Heart left ventricle (tissue), 16 donors: ENCODE measurements at regions of chr6 and their contacts with region 1.

Region 1: DNA sequence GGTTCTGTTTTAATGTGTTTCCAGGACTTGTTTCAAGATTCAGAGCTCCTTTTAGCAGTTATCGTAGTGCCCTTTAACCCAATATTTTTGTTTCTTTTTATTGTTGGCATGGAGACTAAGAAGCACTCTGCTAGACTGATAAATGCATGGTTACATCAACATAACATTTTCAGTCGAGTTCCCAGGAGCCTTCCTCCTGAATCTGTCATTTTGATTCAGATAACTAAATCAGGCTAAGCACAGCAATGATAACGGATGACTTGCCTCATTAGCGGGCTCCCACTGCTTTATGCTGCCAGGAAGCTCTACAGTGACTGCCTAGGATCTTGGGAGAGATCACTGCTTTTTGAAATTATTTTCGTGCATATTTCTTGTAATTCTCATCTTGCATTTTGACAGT is 772.8 kb upstream of the GJE1 start:
- DNase-seq: peak in 3 of 5 donors; percentile 7 to 25 (median 18)
- ATAC-seq: peak; percentile 71 to 94 (median 80)
- H3K4me3 ChIP-seq: peak overlapping the region in 6 of 12 donors; percentile 2 to 25 (median 6)
- H3K27ac ChIP-seq: peak overlapping the region in 9 of 12 donors; percentile 10 to 60 (median 48)
- H3K4me1 ChIP-seq: peaks cover 0 to 20% (median 4%) of the 10 kb centered on the region in 12 donors
- H3K27me3 ChIP-seq: no peaks in the 10 kb centered on the region
- CTCF ChIP-seq: no peak
- POLR2A ChIP-seq: no peak

Region 2: DNA sequence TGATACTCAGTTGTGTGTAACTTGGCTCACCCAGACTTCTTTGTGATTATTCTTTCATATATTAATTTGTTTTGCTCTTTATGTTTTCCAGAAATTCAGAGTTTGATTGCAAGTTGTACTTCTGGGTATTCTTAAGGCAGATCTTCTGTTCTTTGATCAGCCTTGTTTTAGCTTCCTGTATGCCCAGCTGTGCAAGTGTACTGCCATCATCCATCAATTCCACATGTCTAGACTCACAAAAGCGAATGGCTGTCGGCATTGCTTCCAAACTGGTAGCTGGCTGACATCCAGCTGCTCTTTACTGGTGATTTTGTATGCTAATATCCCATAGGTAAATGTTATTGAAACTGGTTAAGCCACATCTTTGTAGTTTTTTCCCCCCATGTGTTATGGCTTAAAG is 900.8 kb before region 1 on chr6:
- intact Hi-C with region 1: no loop called
- DNase-seq: no peak
- ATAC-seq: no peak
- H3K4me3 ChIP-seq: no peak overlapping the region
- H3K27ac ChIP-seq: no peak overlapping the region
- H3K4me1 ChIP-seq: peaks cover 0 to 20% (median 6%) of the 10 kb centered on the region in 12 donors
- H3K27me3 ChIP-seq: no peaks in the 10 kb centered on the region
- CTCF ChIP-seq: no peak
- POLR2A ChIP-seq: no peak

Region 3: GRCh38 chr6:141309295-141309694 is 50.7 kb before region 1 on chr6:
- intact Hi-C with region 1: loop called in 1 of 10 experiments (anchors 2 kb)
- DNase-seq: no peak
- ATAC-seq: peak in 2 of 4 donors; percentile 58 to 62
- H3K4me3 ChIP-seq: no peak overlapping the region
- H3K27ac ChIP-seq: no peak overlapping the region
- H3K4me1 ChIP-seq: peaks cover 0 to 4% (median 0%) of the 10 kb centered on the region in 12 donors
- H3K27me3 ChIP-seq: no peaks in the 10 kb centered on the region
- CTCF ChIP-seq: peak in 5 of 12 donors; percentile 10 to 27 (median 19)
- POLR2A ChIP-seq: no peak

Region 4: GRCh38 chr6:141394125-141394536 is 34.2 kb after region 1 on chr6:
- intact Hi-C with region 1: no loop called
- DNase-seq: peak in 1 of 5 donors; percentile 41
- ATAC-seq: peak in 1 of 4 donors; percentile 15
- H3K4me3 ChIP-seq: no peak overlapping the region
- H3K27ac ChIP-seq: no peak overlapping the region
- H3K4me1 ChIP-seq: no peaks in the 10 kb centered on the region
- H3K27me3 ChIP-seq: no peaks in the 10 kb centered on the region
- CTCF ChIP-seq: no peak
- POLR2A ChIP-seq: no peak